ENCODE measurements at regions of chr17 and their contacts with region 1.

Region 1: GRCh38 chr17:20121359-20122253 is 112.4 kb downstream of the SPECC1 start:
- DNase-seq: peak in 4 of 5 donors; percentile 45 to 57 (median 49)
- ATAC-seq: peak; percentile 41 to 80 (median 68)
- H3K4me3 ChIP-seq: no peak overlapping the region
- H3K27ac ChIP-seq: no peak overlapping the region
- H3K4me1 ChIP-seq: peaks cover 0 to 28% (median 7%) of the 10 kb centered on the region in 12 donors
- H3K27me3 ChIP-seq: no peaks in the 10 kb centered on the region
- CTCF ChIP-seq: peak; percentile 76 to 94 (median 88)
- POLR2A ChIP-seq: no peak

Region 2: GRCh38 chr17:19915245-19915978 is 206.2 kb before region 1 on chr17:
- intact Hi-C with region 1: no loop called
- DNase-seq: no peak
- ATAC-seq: no peak
- H3K4me3 ChIP-seq: no peak overlapping the region
- H3K27ac ChIP-seq: no peak overlapping the region
- H3K4me1 ChIP-seq: no peaks in the 10 kb centered on the region
- H3K27me3 ChIP-seq: no peaks in the 10 kb centered on the region
- CTCF ChIP-seq: no peak
- POLR2A ChIP-seq: no peak

Region 3: DNA sequence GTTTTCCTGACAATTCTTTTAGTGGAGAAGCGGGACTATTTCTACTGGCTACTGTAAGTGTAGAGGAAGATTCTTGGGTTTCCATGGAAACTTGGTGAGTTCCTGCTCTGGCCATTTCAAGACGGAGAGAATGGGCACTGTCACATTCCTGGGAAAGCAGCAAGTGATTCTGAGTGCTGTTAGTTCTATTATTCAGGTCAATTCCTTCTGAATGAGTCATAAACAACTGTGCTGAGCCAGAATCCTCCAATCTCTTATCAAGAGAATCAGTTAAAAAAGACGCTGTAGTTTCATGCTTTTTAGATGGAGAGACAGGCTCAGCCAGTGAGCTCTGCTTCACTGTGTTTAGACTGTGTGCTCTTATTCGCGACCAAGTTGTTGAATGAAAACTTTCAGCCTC is 163.6 kb before region 1 on chr17:
- intact Hi-C with region 1: no loop called
- DNase-seq: no peak
- ATAC-seq: no peak
- H3K4me3 ChIP-seq: no peak overlapping the region
- H3K27ac ChIP-seq: no peak overlapping the region
- H3K4me1 ChIP-seq: peaks cover 0 to 31% (median 1%) of the 10 kb centered on the region in 12 donors
- H3K27me3 ChIP-seq: no peaks in the 10 kb centered on the region
- CTCF ChIP-seq: no peak
- POLR2A ChIP-seq: no peak

Region 4: GRCh38 chr17:19992803-19993713 is 128.5 kb before region 1 on chr17:
- intact Hi-C with region 1: loop called (anchors 1 to 5 kb)
- DNase-seq: peak; percentile 82 to 94 (median 87)
- ATAC-seq: peak; percentile 95 to 99 (median 99)
- H3K4me3 ChIP-seq: peak overlapping the region in 2 of 12 donors; percentile 8 to 13
- H3K27ac ChIP-seq: no peak overlapping the region
- H3K4me1 ChIP-seq: peaks cover 0 to 11% (median 1%) of the 10 kb centered on the region in 12 donors
- H3K27me3 ChIP-seq: no peaks in the 10 kb centered on the region
- CTCF ChIP-seq: peak; percentile 66 to 82 (median 76)
- POLR2A ChIP-seq: no peak

Region 5: DNA sequence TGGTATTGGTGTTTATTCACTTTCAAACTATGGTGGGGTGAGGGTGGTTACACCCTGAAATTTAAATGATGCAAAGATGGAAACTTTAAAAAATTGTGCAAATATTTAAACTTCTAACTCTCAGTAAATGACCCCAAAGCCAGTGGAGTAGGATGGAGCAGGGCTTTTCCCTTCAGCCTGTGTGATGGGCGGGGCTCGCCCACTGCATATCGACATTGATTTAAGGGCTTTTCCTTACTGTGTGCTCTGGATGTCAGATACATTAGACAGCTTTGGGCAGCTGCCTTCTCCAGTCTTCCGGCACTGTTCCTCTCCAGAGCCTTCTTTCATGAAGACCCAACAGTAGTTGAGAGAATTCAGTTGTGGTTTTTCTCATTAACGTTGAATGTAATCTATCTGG is 12.5 kb before region 1 on chr17:
- intact Hi-C with region 1: no loop called
- DNase-seq: no peak
- ATAC-seq: no peak
- H3K4me3 ChIP-seq: no peak overlapping the region
- H3K27ac ChIP-seq: no peak overlapping the region
- H3K4me1 ChIP-seq: no peaks in the 10 kb centered on the region
- H3K27me3 ChIP-seq: no peaks in the 10 kb centered on the region
- CTCF ChIP-seq: no peak
- POLR2A ChIP-seq: no peak

Measured in heart left ventricle (tissue), 16 donors.